IMR-90 (cell line): ENCODE measurements at regions of chr2 and their contacts with region 1.

Region 1: GRCh38 chr2:200864176-200864976 is at the start of gene CLK1:
- DNase-seq: peak; percentile 93
- ATAC-seq: peak; percentile 89
- H3K4me3 ChIP-seq: peak within 1 kb of the TSS; percentile 60
- H3K27ac ChIP-seq: peak within 1 kb of the TSS; percentile 88
- H3K4me1 ChIP-seq: peaks cover 5% of the 10 kb centered on the region
- H3K27me3 ChIP-seq: no peaks in the 10 kb centered on the region
- CTCF ChIP-seq: no peak
- POLR2A ChIP-seq: peak; percentile 99
- RAD21 ChIP-seq: no peak
- total RNA-seq, gene CLK1: 26.2 and 43.9 TPM in 2 replicates

Region 2: DNA sequence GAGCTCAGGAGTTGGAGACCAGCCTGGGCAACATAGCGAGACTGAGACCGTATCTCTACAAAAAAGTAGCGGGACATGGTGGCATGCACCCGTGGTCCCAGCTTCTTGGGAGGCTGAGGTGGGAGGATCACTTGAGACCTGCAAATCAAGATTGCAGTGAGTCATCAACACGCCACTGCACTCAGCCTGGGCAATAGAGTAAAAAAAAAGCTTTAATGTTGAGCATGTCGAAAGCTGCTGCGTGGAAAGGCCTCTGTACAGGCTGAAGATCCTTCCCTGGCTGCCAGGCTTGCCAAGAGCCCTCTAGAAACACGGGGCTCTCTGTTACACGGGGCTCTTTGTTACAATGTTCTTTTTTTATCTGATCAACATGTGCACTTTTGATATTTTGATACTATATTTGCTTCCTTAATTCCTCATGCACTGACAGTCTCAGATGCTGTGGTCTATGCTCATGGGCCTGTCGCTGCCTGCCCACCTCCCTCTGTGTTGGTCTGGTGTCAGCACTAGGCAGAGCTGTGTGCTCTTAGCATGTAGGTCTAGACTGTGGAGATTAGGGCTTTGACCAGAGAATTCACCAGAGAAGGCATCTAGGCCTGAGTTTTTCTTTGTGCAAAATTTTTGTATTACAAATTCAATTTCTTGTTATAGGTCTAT is 18.6 kb before region 1 on chr2:
- CTCF ChIA-PET with region 1: no interaction called
- POLR2A ChIA-PET with region 1: no interaction called
- dilution Hi-C with region 1: no loop called
- in situ Hi-C with region 1: no loop called
- intact Hi-C with region 1: loop called (anchors 2 kb)
- DNase-seq: no peak
- ATAC-seq: no peak
- H3K4me3 ChIP-seq: no peak overlapping the region
- H3K27ac ChIP-seq: no peak overlapping the region
- H3K4me1 ChIP-seq: no peaks in the 10 kb centered on the region
- H3K27me3 ChIP-seq: no peaks in the 10 kb centered on the region; the same call in none of the 2 replicates
- CTCF ChIP-seq: no peak
- POLR2A ChIP-seq: no peak
- RAD21 ChIP-seq: no peak